Esophagus muscularis mucosa (tissue), 4 donors: ENCODE measurements at regions of chrX and their contacts with region 1.

Region 1: DNA sequence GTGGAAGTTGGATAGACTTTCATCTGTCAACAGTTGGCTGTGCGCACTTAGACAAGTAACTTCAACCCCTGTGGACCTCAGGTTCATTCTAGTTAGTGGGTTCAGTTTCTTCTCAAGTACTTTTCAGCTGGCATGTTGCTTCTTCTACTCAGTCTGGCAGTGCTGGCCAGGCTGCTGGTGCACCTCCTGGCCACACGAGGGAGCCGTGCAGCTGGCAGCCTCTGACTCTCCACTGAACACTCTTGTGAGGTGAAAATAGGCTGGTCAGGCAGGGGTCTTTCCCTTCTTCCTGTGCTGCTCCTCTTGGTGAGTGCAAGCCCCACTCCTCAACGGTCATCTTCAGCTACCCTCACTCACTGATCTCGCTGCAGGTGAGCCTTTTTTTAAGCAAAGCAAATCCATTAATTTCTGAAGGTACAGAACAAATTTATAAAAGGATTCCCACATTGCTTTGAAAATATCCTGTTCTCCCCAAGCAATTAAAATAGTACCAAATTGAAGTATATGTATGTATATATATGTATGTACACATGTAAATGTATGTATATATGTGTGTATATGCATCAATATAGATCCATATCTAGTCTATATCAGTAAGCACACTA is 30.6 kb downstream of the LONRF3 start:
- DNase-seq: no peak
- H3K4me3 ChIP-seq: no peak overlapping the region
- H3K27ac ChIP-seq: no peak overlapping the region
- H3K4me1 ChIP-seq: peaks cover 0 to 22% (median 20%) of the 10 kb centered on the region in 4 donors
- H3K27me3 ChIP-seq: no peaks in the 10 kb centered on the region
- CTCF ChIP-seq: peak; percentile 75 to 90 (median 83)
- EP300 ChIP-seq: no peak
- POLR2A ChIP-seq: no peak

Region 2: GRCh38 chrX:118948270-118948669 is 56.8 kb before region 1 on chrX:
- intact Hi-C with region 1: no loop called
- DNase-seq: no peak
- H3K4me3 ChIP-seq: no peak overlapping the region
- H3K27ac ChIP-seq: no peak overlapping the region
- H3K4me1 ChIP-seq: peaks cover 0 to 4% (median 0%) of the 10 kb centered on the region in 4 donors
- H3K27me3 ChIP-seq: no peaks in the 10 kb centered on the region
- CTCF ChIP-seq: no peak
- EP300 ChIP-seq: no peak
- POLR2A ChIP-seq: no peak

Region 3: DNA sequence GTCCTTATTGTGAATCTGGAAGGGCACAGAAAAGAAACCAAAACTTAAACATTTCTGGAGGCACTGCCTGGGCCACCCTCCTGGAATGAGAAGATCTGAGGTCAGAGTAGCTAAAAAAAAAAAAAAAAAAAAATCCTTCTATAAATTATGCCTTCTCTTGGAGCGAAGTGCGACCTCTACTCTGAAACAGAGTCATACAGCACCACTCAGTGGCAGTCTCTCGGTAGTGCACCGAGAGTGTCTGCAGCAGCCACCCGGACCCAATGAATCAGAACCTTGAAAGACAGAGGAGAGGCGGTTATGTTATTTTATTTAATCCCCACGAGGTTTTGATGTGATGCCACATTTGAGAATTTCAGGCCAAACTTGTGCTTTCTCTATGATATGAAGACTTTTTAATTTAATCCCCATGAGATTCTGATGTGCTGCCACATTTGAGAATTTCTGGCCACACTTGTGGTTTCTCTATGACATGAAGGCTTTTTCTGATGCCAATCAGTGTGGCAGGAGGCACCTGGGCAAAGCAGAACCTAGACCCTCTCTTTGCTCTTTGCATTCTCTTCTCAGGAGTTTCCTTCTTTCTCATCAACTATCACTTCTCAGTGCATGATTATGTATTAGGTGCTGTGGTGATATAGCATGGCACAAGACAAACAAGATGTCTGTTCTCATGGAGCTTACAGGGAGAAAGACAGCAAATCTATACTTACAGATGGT is 62.2 kb after region 1 on chrX:
- intact Hi-C with region 1: loop called (anchors 10 kb)
- DNase-seq: no peak
- H3K4me3 ChIP-seq: no peak overlapping the region
- H3K27ac ChIP-seq: no peak overlapping the region
- H3K4me1 ChIP-seq: peaks cover 0 to 4% (median 2%) of the 10 kb centered on the region in 4 donors
- H3K27me3 ChIP-seq: no peaks in the 10 kb centered on the region
- CTCF ChIP-seq: peak; percentile 60 to 63 (median 63)
- EP300 ChIP-seq: no peak
- POLR2A ChIP-seq: no peak

Region 4: GRCh38 chrX:119181491-119181890 is 176.5 kb after region 1 on chrX:
- intact Hi-C with region 1: no loop called
- DNase-seq: no peak
- H3K4me3 ChIP-seq: no peak overlapping the region
- H3K27ac ChIP-seq: no peak overlapping the region
- H3K4me1 ChIP-seq: no peaks in the 10 kb centered on the region
- H3K27me3 ChIP-seq: no peaks in the 10 kb centered on the region
- CTCF ChIP-seq: no peak
- EP300 ChIP-seq: no peak
- POLR2A ChIP-seq: no peak

Region 5: DNA sequence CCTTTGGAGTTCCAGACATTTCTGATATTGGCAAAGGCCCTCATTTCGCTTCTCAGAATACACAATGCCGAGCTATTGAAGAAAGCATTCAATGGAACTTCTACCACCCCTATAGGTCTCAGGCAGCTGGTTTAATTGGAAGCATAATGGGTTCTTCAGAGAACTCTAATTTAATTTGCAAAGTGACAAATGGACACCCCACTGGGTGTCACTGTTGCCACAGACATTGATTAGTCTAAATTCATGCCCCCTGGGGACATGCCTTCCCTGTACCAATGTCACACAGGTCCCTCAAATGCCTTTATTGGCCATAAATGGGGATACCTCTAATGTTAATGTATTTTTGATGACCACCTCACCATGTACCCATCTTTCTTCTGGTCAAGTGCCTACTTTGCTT is 1329.1 kb after region 1 on chrX:
- intact Hi-C with region 1: no loop called
- DNase-seq: no peak
- H3K4me3 ChIP-seq: no peak overlapping the region
- H3K27ac ChIP-seq: no peak overlapping the region
- H3K4me1 ChIP-seq: no peaks in the 10 kb centered on the region
- H3K27me3 ChIP-seq: no peaks in the 10 kb centered on the region
- CTCF ChIP-seq: no peak
- EP300 ChIP-seq: no peak
- POLR2A ChIP-seq: no peak